Astrocyte of the cerebellum (primary cell): ENCODE measurements at regions of chr18 and their contacts with region 1.

Region 1: DNA sequence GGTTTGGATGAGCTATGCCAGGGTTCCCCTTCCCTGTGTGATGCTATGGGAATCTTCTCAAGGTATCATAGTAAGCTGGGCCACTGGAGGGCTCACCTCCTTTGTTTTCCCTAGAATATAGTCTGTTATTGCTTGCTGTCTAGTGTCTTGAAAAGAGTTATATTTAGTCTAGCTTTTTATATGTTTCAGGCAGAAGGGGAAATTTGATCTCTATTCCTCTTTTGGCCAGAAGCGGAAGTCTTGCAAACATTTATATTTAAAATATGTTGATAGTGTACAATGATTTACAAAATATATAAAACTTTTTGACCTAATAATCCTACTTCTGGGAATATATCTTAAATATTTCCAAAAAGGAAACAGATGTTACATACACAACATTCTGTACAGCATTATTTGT is 260.7 kb downstream of the FHOD3 start:
- DNase-seq: no peak
- H3K4me3 ChIP-seq: no peak overlapping the region
- CTCF ChIP-seq: no peak

Region 2: DNA sequence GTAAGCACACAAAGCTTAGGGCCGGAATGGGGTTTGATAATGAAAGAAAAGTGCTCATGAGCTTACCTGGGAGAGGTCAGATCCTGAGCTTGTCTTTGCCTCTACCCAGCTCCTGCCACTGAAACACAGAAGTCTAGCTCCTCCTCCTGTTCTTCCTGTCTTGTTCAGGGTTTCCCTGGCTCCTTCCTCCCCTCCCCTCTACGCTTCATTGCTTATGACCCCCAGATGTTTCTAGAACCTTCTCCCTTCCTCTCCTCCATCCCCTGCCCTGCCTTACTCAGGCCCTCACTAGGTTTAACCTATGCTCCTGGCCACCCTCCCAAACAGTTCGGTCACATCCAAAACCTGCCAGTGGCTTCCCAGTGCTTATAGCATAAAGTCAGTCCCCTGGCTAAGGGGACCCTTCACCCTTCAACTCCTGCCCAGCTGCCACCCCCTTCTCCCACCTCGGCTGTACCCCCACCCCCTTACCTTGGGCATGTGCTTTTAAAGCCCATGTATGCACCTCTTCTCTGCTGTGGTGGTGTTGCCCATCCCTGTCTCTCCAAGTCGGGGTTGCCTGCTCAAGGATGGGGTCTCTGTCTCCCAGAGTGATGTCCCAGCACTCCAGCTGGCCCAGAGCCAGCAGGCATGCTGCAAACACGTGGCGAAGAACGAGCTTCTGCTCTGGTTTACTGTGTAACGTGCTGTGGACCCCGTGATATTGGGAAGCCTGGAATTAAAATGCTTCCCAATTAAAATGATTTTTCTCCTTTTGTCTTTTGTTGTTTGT is 37.0 kb after region 1 on chr18:
- in situ Hi-C with region 1: loop called (anchors 5 kb)
- DNase-seq: no peak
- H3K4me3 ChIP-seq: no peak overlapping the region
- CTCF ChIP-seq: no peak

Region 3: DNA sequence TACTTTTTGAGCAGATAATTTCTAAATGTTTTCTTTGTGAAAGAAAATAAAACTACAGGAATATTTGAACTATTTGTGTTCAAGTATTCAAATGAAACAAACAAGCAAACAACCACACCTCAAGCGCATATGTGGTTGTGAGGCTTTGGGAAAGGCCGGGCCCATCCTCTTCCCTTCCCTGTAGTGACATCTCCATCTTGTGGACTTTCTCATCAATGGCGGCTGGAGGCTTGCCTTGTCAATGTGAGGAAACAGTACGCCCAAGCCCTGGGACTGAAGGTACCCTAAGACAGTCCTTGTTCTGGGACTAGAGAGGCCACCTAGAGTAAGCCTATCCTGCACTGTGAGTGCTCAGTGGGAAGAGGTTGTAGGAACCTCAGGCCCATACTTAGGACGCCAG is 103.8 kb after region 1 on chr18:
- in situ Hi-C with region 1: no loop called
- DNase-seq: no peak
- H3K4me3 ChIP-seq: no peak overlapping the region
- CTCF ChIP-seq: peak; percentile 33